ENCODE measurements at regions of chr12 and their contacts with region 1.

Region 1: DNA sequence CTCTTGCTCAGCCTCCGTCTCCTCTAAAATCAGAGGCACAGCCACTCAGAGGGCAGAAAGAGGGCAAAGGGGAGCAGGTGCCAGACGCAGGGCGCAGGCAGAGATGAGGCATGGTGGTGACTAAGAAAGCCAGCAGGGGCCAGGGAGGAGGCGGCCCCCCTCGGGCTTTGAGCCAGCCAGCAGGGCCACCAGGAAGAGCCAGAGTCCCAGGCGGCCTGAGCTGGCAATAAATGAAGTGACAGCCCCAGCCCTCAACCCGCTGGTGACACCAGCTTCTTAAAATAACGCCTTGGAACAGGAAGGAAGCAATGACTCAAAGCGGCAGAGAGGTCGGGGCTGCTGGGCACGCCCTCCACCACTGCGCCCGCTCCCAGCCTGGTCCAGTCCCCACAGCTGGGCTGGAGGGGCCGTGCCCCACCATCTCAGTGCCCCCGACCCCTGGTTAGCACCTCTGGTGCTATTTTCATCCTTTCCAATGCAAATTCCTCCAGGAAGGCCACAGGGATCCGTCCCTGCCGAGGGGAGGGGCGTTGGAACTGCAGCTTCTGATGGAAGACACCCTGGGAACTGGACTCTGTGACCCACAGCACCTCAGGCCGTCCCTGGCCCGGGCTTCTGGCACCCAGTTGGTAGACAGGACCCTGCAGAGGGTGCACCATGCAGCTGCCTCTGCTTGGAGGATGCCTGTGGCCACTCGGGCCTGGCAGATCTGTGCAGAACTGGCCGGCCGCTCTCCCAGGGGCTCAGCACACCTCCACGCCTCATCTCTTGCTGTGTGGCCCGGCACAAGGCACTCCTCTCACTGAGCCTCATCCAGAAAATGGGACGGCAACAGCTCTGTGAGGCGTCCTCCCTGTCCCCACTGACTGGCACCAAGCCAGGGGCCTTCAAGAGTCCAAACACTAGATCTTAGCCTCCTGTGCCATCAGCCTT is 113.7 kb downstream of the NCOR2 start:
- DNase-seq: peak; percentile 85
- ATAC-seq: peak; percentile 74
- H3K4me3 ChIP-seq: peak overlapping the region in 4 of 5 experiments; percentile 21 to 45 (median 42)
- H3K4me3 Mint-ChIP-seq: peak overlapping the region; percentile 72
- H3K27ac ChIP-seq: peak overlapping the region; percentile 88
- H3K27ac Mint-ChIP-seq: peak overlapping the region; percentile 82
- H3K4me1 ChIP-seq: peaks cover 44 to 73% of the 10 kb centered on the region in 2 donors
- H3K4me1 Mint-ChIP-seq: peaks cover 66% of the 10 kb centered on the region
- H3K27me3 ChIP-seq: no peaks in the 10 kb centered on the region
- H3K27me3 Mint-ChIP-seq: no peaks in the 10 kb centered on the region
- CTCF ChIP-seq: peak; percentile 28

Region 2: GRCh38 chr12:123601602-123602489 is 851.8 kb before region 1 on chr12 and contains the start of gene DDX55:
- CTCF ChIA-PET with region 1: no interaction called
- POLR2A ChIA-PET with region 1: no interaction called
- intact Hi-C with region 1: loop called (anchors 5 kb)
- DNase-seq: peak; percentile 93
- ATAC-seq: peak; percentile 89
- H3K4me3 ChIP-seq: peak within 1 kb of the TSS; percentile 62 to 99 (median 93)
- H3K4me3 Mint-ChIP-seq: peak within 1 kb of the TSS; percentile 99
- H3K27ac ChIP-seq: peak within 1 kb of the TSS; percentile 74 to 85
- H3K27ac Mint-ChIP-seq: peak within 1 kb of the TSS; percentile 97
- H3K4me1 ChIP-seq: peaks cover 12 to 23% of the 10 kb centered on the region in 2 donors
- H3K4me1 Mint-ChIP-seq: peaks cover 23% of the 10 kb centered on the region
- H3K27me3 ChIP-seq: no peaks in the 10 kb centered on the region
- H3K27me3 Mint-ChIP-seq: no peaks in the 10 kb centered on the region
- CTCF ChIP-seq: peak; percentile 40
- total RNA-seq, gene DDX55: 33.3 and 35.6 TPM in 2 replicates

Region 3: GRCh38 chr12:124466216-124467128 is 12.8 kb after region 1 on chr12:
- CTCF ChIA-PET with region 1: interaction called, 16 read pairs
- POLR2A ChIA-PET with region 1: interaction called, 25 read pairs
- intact Hi-C with region 1: loop called (anchors 1 kb)
- DNase-seq: peak; percentile 90
- ATAC-seq: peak; percentile 96
- H3K4me3 ChIP-seq: peak overlapping the region; percentile 5 to 61 (median 45)
- H3K4me3 Mint-ChIP-seq: peak overlapping the region; percentile 80
- H3K27ac ChIP-seq: peak overlapping the region; percentile 68 to 78
- H3K27ac Mint-ChIP-seq: peak overlapping the region; percentile 83
- H3K4me1 ChIP-seq: peaks cover 17 to 22% of the 10 kb centered on the region in 2 donors
- H3K4me1 Mint-ChIP-seq: peaks cover 48% of the 10 kb centered on the region
- H3K27me3 ChIP-seq: no peaks in the 10 kb centered on the region
- H3K27me3 Mint-ChIP-seq: no peaks in the 10 kb centered on the region
- CTCF ChIP-seq: peak; percentile 70

Region 4: GRCh38 chr12:124512667-124513296 is 59.1 kb after region 1 on chr12:
- CTCF ChIA-PET with region 1: no interaction called
- POLR2A ChIA-PET with region 1: no interaction called
- intact Hi-C with region 1: no loop called
- DNase-seq: no peak
- ATAC-seq: no peak
- H3K4me3 ChIP-seq: no peak overlapping the region
- H3K4me3 Mint-ChIP-seq: no peak overlapping the region
- H3K27ac ChIP-seq: no peak overlapping the region
- H3K27ac Mint-ChIP-seq: no peak overlapping the region
- H3K4me1 ChIP-seq: peaks cover 0 to 5% of the 10 kb centered on the region in 2 donors
- H3K4me1 Mint-ChIP-seq: peaks cover 24% of the 10 kb centered on the region
- H3K27me3 ChIP-seq: no peaks in the 10 kb centered on the region
- H3K27me3 Mint-ChIP-seq: no peaks in the 10 kb centered on the region
- CTCF ChIP-seq: no peak

Region 5: DNA sequence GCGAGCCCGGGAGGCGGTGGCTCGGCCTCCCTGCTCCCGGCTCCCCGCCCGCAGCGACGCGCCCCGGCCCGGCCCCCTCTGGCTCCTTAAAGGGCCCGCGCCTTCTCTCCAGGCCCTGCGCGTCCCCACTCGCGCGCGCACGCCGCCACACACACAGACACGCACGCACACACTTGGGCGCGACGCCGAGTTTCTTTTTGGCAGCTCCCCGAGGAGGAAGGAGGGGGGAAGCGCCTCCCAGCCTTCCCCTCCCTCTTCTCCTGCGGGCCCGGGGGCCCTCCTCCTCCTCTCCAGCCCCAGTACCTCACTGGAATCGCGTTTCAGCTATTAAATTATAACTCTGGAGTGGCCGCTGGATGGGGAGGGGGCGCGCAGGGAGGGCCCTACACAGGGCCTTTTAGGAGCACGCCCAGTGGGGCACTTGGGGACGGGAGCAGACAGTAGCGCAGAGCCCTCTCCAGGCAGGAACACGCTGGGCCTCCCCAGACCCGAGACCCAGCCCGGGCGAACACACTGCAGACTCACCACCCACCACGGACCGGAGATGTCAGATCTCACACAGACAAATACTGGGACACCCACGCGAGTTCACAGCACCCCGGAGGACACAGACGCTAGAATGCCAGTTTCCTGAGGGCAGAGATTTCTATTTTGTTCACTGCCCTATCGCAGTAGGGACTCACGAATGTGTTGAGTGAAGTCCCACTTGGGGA is 114.1 kb after region 1 on chr12:
- CTCF ChIA-PET with region 1: no interaction called
- POLR2A ChIA-PET with region 1: no interaction called
- intact Hi-C with region 1: loop called (anchors 1 kb)
- DNase-seq: peak; percentile 86
- ATAC-seq: peak; percentile 70
- H3K4me3 ChIP-seq: peak overlapping the region; percentile 30 to 82 (median 65)
- H3K4me3 Mint-ChIP-seq: peak overlapping the region; percentile 86
- H3K27ac ChIP-seq: peak overlapping the region; percentile 38 to 65
- H3K27ac Mint-ChIP-seq: peak overlapping the region; percentile 82
- H3K4me1 ChIP-seq: peaks cover 24 to 43% of the 10 kb centered on the region in 2 donors
- H3K4me1 Mint-ChIP-seq: peaks cover 40% of the 10 kb centered on the region
- H3K27me3 ChIP-seq: no peaks in the 10 kb centered on the region
- H3K27me3 Mint-ChIP-seq: no peaks in the 10 kb centered on the region
- CTCF ChIP-seq: no peak

Region 6: DNA sequence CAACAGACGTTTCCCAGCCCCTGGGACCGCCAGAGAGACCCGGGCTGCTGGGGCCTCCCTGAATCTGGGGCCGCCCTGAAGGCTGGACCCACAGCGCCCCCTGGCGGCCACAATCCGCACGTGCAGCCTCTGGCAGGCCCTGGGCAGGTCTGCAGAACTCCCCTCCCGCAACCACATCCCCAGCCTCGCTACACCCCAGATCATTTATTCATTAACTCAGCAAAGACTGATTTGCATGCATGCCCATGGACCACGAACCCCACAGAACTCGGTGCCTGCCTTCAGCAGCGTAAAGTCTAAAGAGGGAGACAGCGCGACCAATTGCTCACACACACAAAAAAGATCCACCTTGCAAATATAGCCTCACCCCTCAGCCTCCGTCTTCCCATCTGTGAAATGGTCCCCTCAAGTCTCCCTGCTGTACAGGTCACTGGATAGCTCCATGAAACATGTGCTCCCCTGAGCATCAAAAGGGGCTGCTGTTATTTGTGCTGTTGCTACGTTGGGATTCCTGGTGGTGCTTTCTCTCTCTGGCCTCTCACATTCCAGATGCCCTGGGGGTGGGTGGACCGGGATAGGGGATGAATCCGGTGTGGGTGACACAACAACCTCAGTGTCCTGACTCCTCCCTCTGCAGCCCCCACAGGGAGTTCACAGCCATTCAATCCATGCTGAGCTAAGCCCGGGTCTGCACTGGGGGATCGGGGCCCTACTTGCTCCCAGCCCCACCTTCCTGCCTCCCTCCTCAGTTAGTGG is 313.6 kb after region 1 on chr12:
- CTCF ChIA-PET with region 1: no interaction called
- POLR2A ChIA-PET with region 1: no interaction called
- intact Hi-C with region 1: loop called (anchors 5 kb)
- DNase-seq: peak; percentile 80
- ATAC-seq: peak; percentile 90
- H3K4me3 ChIP-seq: no peak overlapping the region
- H3K4me3 Mint-ChIP-seq: no peak overlapping the region
- H3K27ac ChIP-seq: no peak overlapping the region
- H3K27ac Mint-ChIP-seq: peak overlapping the region; percentile 1
- H3K4me1 ChIP-seq: peaks cover 11 to 14% of the 10 kb centered on the region in 2 donors
- H3K4me1 Mint-ChIP-seq: peaks cover 10% of the 10 kb centered on the region
- H3K27me3 ChIP-seq: peaks cover 0 to 9% (median 4%) of the 10 kb centered on the region in 4 experiments
- H3K27me3 Mint-ChIP-seq: peaks cover 12% of the 10 kb centered on the region
- CTCF ChIP-seq: peak; percentile 98